BJ (cell line): ENCODE measurements at regions of chr19 and their contacts with region 1.

Region 1: GRCh38 chr19:50729894-50730293 is 6.7 kb downstream of the CLEC11A start:
- DNase-seq: no peak
- H3K4me3 ChIP-seq: no peak overlapping the region
- H3K27me3 ChIP-seq: no peaks in the 10 kb centered on the region
- CTCF ChIP-seq: no peak

Region 2: DNA sequence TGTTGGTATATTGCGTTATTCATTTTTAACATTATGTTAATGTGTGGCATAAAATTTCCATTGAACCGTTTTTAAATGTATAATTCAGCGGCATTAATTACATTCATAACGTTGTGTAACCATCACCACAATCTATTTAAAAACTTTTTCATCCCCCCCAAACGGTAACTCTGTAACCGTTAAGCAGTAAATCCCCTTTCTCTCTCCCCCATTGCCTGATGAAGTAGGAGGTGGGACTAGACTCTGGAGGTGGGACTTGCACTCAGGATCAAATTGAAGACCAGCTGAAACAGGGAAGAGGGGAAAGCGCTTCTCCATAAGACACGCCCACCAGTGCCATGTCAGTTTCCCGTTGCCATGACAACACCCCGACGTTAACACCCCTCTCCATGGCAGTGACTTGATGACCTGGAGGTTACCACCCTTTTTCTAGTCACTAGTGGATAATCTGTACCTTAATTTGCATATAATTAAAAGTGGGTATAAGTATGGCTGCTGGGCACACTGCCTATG is 10.1 kb after region 1 on chr19:
- CTCF ChIA-PET with region 1: interaction called, 10 read pairs
- POLR2A ChIA-PET with region 1: interaction called, 30 read pairs
- DNase-seq: no peak
- H3K4me3 ChIP-seq: no peak overlapping the region
- H3K27me3 ChIP-seq: peaks cover 2% of the 10 kb centered on the region
- CTCF ChIP-seq: no peak